Activated T-helper 1 cell treated with anti-CD3 and anti-CD28 coated beads, Interleukin-12 subunit alpha, Interleukin-12 subunit beta, Interleukin-2, Interleukin-4 antibody, amounts not matched to agents 30 ng/mL and 10 ng/mL and 1 ng/mL, durations not matched to agents 14 hours and 24 hours and 36 hours (primary cell): ENCODE measurements at regions of chr7 and their contacts with region 1.

Region 1: DNA sequence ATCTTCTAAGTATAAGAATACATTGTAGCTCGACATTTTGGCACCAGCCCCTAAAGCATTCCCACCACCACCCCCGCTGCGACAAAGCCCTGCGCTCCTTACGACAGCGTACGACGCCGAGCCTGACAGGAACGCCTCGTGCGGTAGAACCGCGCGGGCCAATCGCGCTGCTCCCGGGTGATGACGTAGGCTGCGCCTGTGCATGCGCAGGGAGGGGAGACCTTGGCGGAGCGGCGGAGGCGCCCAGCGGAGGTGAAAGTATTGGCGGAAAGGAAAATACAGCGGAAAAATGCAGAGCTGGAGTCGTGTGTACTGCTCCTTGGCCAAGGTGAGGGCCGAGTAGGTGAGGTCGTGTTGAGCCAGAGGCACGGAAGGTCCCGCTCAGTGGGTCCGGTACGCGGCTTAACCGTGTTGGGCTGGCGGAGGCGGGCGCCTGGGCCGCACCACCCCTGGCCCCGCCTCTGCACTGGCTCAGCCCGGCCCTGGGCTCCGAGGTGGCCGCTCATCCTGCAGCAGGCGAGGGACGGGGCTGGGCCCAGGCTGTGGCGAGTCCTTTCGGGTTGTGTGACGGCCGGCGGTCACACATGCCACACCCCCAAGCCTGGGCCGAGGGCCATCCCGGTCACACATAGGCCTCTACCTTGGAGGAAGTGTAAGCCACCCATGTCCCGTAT is at the start of gene DLD:
- DNase-seq: peak; percentile 93
- H3K4me3 Mint-ChIP-seq: peak within 1 kb of the TSS; percentile 100
- H3K27ac Mint-ChIP-seq: peak within 1 kb of the TSS; percentile 100
- H3K4me1 Mint-ChIP-seq: peaks cover 49% of the 10 kb centered on the region
- H3K27me3 Mint-ChIP-seq: peaks cover 3% of the 10 kb centered on the region
- total RNA-seq, gene DLD: 98.6 and 114 TPM in 2 replicates

Region 2: DNA sequence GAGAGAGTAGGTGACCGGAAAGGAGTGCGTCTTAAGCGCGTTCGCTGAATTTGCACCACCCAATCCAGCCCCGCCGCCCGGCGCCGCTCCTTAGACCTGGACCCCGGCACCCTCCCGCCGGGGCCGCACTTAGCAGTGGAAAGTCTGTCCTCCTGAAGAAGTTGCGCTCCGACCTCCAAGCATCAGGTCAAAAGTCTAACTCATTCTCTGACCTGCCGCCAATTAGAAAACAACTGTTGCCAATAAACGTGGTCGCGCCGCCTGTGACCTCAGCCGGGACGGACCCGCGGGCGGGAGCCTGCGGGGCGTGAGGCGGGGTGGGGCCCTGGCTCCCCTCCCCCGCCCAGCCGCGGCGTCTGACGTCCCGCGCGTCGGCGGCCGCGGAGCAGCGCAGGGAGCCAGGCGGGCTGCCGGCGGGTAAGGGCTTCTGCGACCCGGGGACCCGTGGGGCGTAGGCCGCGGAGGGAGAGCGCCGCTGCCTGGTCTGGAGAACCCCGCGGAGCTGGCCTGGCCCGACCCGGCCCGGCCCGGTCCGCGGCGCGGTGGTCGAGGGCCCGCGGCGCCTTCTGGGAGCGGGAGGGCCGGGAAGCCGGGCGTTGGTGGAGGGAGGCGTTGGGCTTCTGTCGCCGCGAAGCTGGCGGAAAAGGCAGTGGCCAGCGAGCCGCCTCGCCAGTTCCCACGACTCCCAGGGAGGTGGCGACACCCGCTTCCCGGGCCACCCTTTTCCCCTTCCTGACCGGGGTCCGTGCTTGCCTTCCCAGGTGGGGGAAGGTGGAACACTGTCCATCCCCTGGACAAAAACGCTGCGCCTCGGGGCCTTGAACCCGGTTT is 311.0 kb before region 1 on chr7 and contains the start of gene BCAP29:
- intact Hi-C with region 1: loop called (anchors 5 kb)
- DNase-seq: peak; percentile 65
- H3K4me3 Mint-ChIP-seq: peak within 1 kb of the TSS; percentile 89
- H3K27ac Mint-ChIP-seq: peak within 1 kb of the TSS; percentile 86
- H3K4me1 Mint-ChIP-seq: peaks cover 26% of the 10 kb centered on the region
- H3K27me3 Mint-ChIP-seq: no peaks in the 10 kb centered on the region
- total RNA-seq, gene BCAP29: 43.5 and 44.5 TPM in 2 replicates

Region 3: DNA sequence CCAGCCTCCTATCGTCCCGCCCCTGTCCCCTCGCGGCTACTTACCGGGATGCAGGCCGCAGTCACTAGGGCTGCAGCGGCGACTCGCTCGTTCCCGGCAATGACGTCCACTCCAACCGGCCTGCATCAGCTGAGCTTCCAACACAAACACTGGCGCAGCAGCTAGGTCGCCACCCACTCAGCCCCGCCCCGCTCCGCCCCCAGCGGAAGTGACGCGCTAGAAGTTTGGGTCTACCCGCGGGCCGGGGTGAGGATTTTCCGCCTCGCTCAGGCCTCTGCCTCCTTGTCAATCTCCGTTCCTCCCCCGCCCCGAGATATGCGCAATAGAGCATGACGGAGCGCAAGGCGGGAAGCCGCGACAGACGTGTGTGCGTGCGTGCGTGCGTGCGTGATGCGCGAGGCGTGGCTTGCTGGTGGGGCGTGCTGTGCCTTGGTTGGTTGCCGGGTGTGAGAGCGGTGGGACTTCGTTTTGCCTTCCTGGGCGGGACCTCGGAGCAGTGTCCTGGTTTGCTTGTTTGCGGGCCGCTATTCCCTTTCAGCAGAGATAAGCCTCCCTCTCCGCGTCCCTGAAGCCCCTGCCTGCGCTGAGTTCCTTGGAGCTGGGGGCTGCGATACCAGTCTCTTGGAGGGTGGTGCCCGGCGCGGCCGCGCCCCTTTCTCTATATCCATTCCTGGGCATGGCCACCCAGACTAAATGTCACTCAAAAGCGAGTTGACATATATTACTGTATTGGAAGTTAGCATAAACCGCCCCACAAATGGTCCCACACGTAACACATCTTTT is 635.1 kb after region 1 on chr7 and contains the start of gene PNPLA8:
- intact Hi-C with region 1: loop called (anchors 1 kb)
- DNase-seq: peak; percentile 100
- H3K4me3 Mint-ChIP-seq: peak within 1 kb of the TSS; percentile 92
- H3K27ac Mint-ChIP-seq: peak within 1 kb of the TSS; percentile 97
- H3K4me1 Mint-ChIP-seq: peaks cover 34% of the 10 kb centered on the region
- H3K27me3 Mint-ChIP-seq: peaks cover 3% of the 10 kb centered on the region
- total RNA-seq, gene PNPLA8: 16.8 and 18.3 TPM in 2 replicates